Endothelial cell of umbilical vein (primary cell): ENCODE measurements at regions of chr14 and their contacts with region 1.

Region 1: DNA sequence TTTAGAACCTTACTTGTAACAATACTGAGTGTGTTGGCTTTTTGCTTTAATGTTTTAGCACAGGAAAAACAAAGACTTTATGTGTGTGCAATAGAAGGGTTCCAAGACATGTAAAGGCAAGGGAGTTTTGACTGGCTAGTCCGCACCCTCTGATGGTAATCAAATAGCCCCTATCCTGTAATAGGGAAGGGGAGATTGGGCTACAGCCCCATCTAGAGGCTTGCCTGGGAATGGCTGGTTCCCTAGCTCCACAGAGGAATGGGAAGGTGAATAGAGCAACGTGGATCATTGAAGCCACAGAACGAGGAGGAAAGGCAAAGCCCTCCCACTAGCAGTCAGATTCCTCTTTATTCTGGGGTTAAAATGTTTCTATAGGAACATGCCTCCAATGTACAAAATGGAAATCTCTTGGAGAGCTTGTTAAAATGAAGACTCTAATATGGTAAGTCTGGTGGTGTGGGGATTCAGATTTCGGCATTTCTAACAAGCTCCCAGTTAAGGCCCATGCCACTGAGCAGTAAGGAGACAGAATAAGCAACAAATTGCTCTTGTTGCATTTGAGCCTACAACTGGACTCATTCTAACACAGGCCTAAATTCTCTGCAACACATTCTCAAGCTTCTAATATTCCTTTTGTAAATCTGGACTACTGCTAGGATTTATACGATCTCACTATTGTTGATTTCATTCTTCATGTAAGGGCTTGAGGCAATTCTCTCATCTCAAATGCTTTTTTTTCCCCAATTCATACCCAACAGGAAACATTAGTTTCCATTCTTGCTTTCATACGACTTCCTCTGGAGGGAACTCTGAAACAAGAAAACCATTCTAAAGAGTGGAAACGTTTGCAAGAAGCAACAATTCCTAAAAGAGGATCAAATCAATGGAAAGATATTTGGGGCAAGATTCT is 57.1 kb downstream of the NIN start:
- DNase-seq: peak; percentile 60
- H3K4me3 ChIP-seq: no peak overlapping the region
- H3K27ac ChIP-seq: peak overlapping the region; percentile 71
- H3K4me1 ChIP-seq: peaks cover 33% of the 10 kb centered on the region
- H3K27me3 ChIP-seq: no peaks in the 10 kb centered on the region
- CTCF ChIP-seq: peak; percentile 83 to 84
- POLR2A ChIP-seq: no peak

Region 2: GRCh38 chr14:50321009-50321660 is 452.8 kb before region 1 on chr14:
- CTCF ChIA-PET with region 1: interaction called, 6 read pairs
- POLR2A ChIA-PET with region 1: no interaction called
- dilution Hi-C with region 1: no loop called
- intact Hi-C with region 1: loop called (anchors 5 kb)
- DNase-seq: peak; percentile 96
- H3K4me3 ChIP-seq: peak overlapping the region in 2 of 3 experiments; percentile 11 to 53
- H3K27ac ChIP-seq: peak overlapping the region; percentile 88
- H3K4me1 ChIP-seq: peaks cover 8% of the 10 kb centered on the region
- H3K27me3 ChIP-seq: no peaks in the 10 kb centered on the region
- CTCF ChIP-seq: peak; percentile 86 to 87
- POLR2A ChIP-seq: no peak

Region 3: DNA sequence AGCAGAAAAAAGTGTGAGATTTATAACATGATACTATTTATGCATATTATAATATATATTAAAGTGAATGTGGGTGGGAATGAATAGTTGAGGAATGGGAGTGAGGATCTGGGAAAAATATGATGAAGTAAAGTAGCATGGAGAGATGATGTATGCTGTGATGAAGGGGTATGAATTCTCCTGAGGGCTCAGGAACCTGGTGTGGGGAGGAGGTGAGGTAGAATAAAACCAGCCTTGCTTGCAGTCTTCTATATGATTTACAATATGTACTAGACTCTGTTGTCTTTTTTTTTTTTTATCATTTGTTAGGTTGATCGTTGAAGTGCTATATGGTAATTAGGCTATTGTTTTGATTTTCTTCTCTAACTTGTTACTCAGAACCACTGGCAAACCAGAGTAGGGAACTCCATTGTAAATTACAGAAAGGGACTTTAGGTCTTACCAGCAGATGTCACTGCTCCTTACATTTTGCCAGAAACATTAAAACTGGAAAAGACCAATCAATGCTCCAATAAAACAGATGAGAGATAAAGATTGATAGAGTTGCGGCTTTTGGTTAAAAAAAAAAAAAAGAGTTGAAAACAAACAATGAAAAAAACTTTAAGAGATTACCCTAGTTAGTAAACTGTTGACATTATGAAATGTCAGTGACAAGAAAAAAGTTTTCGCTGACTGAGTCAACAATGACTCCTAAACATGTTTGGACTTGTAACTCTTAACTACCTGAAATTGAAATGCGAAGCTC is 174.0 kb before region 1 on chr14:
- CTCF ChIA-PET with region 1: interaction called, 42 read pairs
- POLR2A ChIA-PET with region 1: no interaction called
- dilution Hi-C with region 1: no loop called
- intact Hi-C with region 1: loop called (anchors 1 kb)
- DNase-seq: peak; percentile 68
- H3K4me3 ChIP-seq: no peak overlapping the region
- H3K27ac ChIP-seq: no peak overlapping the region
- H3K4me1 ChIP-seq: peaks cover 3% of the 10 kb centered on the region
- H3K27me3 ChIP-seq: no peaks in the 10 kb centered on the region
- CTCF ChIP-seq: peak; percentile 35 to 46
- POLR2A ChIP-seq: no peak

Region 4: GRCh38 chr14:50619556-50620141 is 154.2 kb before region 1 on chr14:
- CTCF ChIA-PET with region 1: interaction called, 17 read pairs
- POLR2A ChIA-PET with region 1: no interaction called
- dilution Hi-C with region 1: no loop called
- intact Hi-C with region 1: loop called (anchors 1 kb)
- DNase-seq: peak; percentile 70
- H3K4me3 ChIP-seq: no peak overlapping the region
- H3K27ac ChIP-seq: no peak overlapping the region
- H3K4me1 ChIP-seq: peaks cover 5% of the 10 kb centered on the region
- H3K27me3 ChIP-seq: no peaks in the 10 kb centered on the region
- CTCF ChIP-seq: peak; percentile 37 to 42
- POLR2A ChIP-seq: no peak

Region 5: GRCh38 chr14:50762001-50762930 is 11.6 kb before region 1 on chr14:
- CTCF ChIA-PET with region 1: interaction called, 91 read pairs
- POLR2A ChIA-PET with region 1: interaction called, 5 read pairs
- dilution Hi-C with region 1: no loop called
- intact Hi-C with region 1: no loop called
- DNase-seq: no peak
- H3K4me3 ChIP-seq: no peak overlapping the region
- H3K27ac ChIP-seq: no peak overlapping the region
- H3K4me1 ChIP-seq: no peaks in the 10 kb centered on the region
- H3K27me3 ChIP-seq: no peaks in the 10 kb centered on the region
- CTCF ChIP-seq: no peak
- POLR2A ChIP-seq: no peak

Region 6: GRCh38 chr14:50798048-50798421 is 24.1 kb after region 1 on chr14:
- CTCF ChIA-PET with region 1: interaction called, 42 read pairs
- POLR2A ChIA-PET with region 1: no interaction called
- dilution Hi-C with region 1: no loop called
- intact Hi-C with region 1: no loop called
- DNase-seq: no peak
- H3K4me3 ChIP-seq: no peak overlapping the region
- H3K27ac ChIP-seq: no peak overlapping the region
- H3K4me1 ChIP-seq: peaks cover 50% of the 10 kb centered on the region
- H3K27me3 ChIP-seq: no peaks in the 10 kb centered on the region
- CTCF ChIP-seq: no peak
- POLR2A ChIP-seq: no peak

Region 7: GRCh38 chr14:51157012-51157411 is 383.1 kb after region 1 on chr14:
- CTCF ChIA-PET with region 1: no interaction called
- POLR2A ChIA-PET with region 1: no interaction called
- dilution Hi-C with region 1: no loop called
- intact Hi-C with region 1: no loop called
- DNase-seq: peak; percentile 13
- H3K4me3 ChIP-seq: no peak overlapping the region
- H3K27ac ChIP-seq: no peak overlapping the region
- H3K4me1 ChIP-seq: no peaks in the 10 kb centered on the region
- H3K27me3 ChIP-seq: peaks cover 0 to 2% of the 10 kb centered on the region in 2 experiments
- CTCF ChIP-seq: peak in 1 of 2 donors; percentile 9
- POLR2A ChIP-seq: no peak